OCI-LY7 (cell line): ENCODE measurements at regions of chr22 and their contacts with region 1.

Region 1: DNA sequence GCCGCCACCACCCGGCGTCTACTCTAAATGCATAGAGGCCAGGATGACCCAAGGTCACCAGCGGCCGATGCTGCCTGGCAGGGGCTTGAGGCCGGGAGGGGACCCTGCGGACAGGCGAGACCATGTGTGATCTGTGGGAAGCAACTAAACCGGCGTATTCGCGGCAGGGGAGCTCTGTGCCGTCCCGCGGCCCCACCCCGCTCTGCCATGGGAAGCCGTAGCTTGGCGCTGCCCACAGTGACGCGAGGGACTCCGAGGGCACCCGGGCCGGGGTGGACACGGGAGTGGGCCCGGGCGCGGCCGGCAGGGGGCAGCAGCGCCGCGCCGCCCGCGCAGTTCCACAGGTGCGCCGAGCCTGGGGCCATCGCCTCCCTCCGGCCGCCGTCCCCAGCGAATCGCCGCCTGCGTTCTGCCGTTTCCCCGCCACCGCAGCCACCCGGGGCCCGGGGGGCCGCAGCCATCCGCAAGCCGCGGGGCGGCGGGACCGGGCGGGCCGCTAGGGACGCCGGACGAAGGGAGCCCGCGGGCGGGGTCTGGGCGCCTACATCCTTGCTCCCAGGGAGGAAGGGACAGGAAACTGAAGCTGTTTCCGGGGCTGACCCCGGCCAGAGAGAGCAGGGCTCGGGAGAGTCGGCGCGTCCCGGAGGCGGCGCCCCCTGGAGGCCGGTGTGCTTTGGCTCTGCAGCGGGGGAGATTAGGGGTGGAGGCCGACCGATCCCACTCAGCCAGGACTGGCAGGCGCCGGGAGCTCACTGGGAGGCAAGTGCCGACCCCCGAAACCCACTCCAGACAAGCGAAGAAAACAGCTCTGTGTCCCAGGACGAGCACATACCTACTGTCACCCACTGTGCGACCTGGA is 12.5 kb upstream of the HDHD5 start:
- DNase-seq: peak; percentile 92
- H3K4me3 ChIP-seq: peak overlapping the region; percentile 72
- H3K27ac ChIP-seq: peak overlapping the region; percentile 46
- H3K4me1 ChIP-seq: peaks cover 11% of the 10 kb centered on the region
- CTCF ChIP-seq: peak; percentile 90

Region 2: DNA sequence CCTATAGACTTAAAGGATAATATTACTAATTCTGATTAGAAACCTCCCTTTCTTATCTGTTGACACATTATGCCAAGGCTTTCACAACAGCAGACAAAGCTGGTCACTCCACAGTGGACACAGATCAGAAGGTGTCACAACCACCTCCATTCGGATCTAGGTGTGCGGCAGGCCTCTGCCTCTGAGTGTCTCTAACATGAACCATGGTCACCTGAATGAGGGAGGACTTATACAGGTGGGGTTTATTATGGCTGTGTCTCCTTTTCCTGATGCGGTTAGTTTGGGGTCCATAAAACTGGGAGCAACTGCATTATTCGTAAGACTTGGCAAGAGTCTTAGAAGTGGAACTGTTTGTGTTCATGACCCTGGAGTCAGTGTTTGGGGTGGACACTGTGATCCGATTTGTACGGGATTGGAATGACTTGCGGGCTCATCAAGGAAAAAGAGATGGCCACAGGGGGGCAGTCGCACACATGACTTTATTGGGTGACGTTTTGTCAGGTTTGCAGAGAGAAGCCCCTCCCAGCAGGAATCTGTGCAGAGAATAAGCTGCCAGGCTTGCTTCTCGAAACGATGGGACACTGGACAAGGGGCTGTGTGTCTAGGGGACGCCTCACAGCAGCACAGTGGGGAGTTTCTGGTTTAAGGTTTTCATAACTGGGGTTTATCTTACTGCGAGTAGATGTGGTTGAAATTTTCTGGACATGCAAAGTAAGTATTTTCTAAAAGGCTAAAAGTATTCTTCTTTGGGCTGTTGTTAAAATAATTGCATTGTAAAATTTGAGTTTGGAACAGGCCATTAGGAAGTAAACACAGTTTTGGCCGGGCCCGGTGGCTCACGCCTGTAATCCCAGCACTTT is 254.2 kb before region 1 on chr22:
- CTCF ChIA-PET with region 1: no interaction called
- POLR2A ChIA-PET with region 1: no interaction called
- intact Hi-C with region 1: loop called (anchors 5 kb)
- DNase-seq: peak; percentile 85
- H3K4me3 ChIP-seq: no peak overlapping the region
- H3K27ac ChIP-seq: no peak overlapping the region
- H3K4me1 ChIP-seq: peaks cover 89% of the 10 kb centered on the region
- CTCF ChIP-seq: peak; percentile 94

Region 3: GRCh38 chr22:17047656-17048055 is 123.9 kb before region 1 on chr22:
- CTCF ChIA-PET with region 1: no interaction called
- POLR2A ChIA-PET with region 1: no interaction called
- intact Hi-C with region 1: no loop called
- DNase-seq: no peak
- H3K4me3 ChIP-seq: no peak overlapping the region
- H3K27ac ChIP-seq: no peak overlapping the region
- H3K4me1 ChIP-seq: peaks cover 30% of the 10 kb centered on the region
- CTCF ChIP-seq: no peak

Region 4: DNA sequence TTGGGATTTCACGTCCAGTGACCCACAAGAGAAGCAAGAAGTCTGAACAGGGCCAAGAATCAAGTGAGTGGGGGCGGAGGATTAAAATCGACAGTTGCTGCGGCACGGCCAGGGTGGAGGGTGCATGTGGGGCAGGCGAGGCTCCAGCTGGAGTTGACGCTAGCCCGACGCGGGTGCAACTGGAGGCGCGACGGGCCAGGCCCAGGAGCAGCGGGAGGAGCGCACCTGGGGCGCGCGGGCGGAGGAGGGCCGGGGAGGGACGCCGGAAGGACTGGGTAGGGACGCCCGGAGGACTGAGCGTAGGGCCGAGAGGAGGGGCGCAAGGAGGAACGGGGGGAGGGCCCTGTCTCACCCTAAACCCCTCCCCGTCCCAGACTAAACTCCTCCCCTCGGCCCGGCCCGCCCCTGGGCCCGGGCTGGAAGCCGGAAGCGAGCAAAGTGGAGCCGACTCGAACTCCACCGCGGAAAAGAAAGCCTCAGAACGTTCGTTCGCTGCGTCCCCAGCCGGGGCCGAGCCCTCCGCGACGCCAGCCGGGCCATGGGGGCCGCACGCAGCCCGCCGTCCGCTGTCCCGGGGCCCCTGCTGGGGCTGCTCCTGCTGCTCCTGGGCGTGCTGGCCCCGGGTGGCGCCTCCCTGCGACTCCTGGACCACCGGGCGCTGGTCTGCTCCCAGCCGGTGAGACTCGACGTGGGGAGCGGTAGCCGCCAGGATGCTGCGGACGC is 86.8 kb before region 1 on chr22 and contains the start of gene IL17RA:
- CTCF ChIA-PET with region 1: no interaction called
- POLR2A ChIA-PET with region 1: no interaction called
- intact Hi-C with region 1: loop called (anchors 2 kb)
- DNase-seq: peak; percentile 92
- H3K4me3 ChIP-seq: peak within 1 kb of the TSS; percentile 92
- H3K27ac ChIP-seq: peak within 1 kb of the TSS; percentile 19
- H3K4me1 ChIP-seq: peaks cover 50% of the 10 kb centered on the region
- CTCF ChIP-seq: no peak
- total RNA-seq, gene IL17RA: 5.5 and 7.8 TPM in 2 replicates

Region 5: DNA sequence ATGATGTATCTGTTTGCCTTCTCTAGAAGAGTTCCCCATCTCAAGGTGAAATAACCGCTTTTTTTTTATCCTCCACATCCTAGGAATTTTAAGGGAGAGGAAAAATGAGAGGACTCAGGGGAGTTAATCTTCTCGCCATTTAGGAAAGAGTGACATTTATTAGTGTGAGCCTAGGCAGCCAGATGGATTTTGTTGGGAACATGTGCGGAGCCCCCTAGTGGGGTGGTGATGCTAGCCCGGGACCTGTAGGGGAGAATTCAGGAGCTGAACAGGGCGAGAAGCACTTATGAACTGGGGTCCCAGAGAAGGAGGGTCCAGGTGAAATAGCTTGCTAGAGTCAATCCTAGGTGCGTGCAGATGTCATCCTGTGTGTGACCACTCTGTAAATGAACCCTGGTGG is 76.0 kb before region 1 on chr22:
- CTCF ChIA-PET with region 1: no interaction called
- POLR2A ChIA-PET with region 1: no interaction called
- intact Hi-C with region 1: no loop called
- DNase-seq: no peak
- H3K4me3 ChIP-seq: no peak overlapping the region
- H3K27ac ChIP-seq: no peak overlapping the region
- H3K4me1 ChIP-seq: peaks cover 25% of the 10 kb centered on the region
- CTCF ChIP-seq: peak; percentile 74

Region 6: DNA sequence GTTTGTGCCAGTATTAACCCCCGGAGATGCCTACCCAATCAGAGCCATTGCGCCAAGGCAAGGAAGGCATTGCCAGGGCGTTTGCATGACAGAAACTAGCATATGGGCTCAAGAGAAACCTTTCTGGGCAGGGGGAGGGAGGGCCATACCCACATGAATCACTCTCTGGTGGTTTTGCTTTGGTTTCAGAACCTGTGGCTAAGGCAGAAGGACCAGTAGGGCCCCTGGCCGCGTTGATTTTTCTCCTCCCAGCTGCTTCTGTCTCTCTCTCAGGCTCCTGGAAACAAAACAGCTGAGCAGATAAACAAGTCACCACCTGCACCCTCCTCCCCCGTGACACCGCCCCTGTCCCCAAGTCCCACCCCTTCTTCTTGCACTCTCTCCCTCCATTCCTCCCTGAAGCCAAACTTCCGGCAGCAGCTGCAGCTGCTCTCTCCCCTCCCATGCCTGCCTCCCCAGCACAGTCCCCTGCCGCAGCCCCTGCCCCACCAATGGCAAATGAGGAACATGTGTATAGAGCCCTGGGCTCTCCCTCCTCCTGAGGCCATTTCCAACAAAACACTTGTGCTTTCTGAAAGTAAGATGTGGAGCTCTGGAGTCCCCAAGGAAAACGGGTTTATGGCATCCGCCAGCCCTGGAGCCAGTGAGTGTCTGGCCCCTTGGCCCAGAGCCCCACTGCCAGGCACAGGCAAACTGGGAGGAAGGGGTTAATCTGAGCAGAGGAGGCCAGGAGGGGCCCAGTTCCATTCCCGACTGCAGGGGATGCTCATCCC is 86.7 kb after region 1 on chr22:
- CTCF ChIA-PET with region 1: interaction called, 3 read pairs
- POLR2A ChIA-PET with region 1: interaction called, 3 read pairs
- intact Hi-C with region 1: loop called (anchors 2 kb)
- DNase-seq: peak; percentile 93
- H3K4me3 ChIP-seq: peak overlapping the region; percentile 44
- H3K27ac ChIP-seq: peak overlapping the region; percentile 84
- H3K4me1 ChIP-seq: peaks cover 23% of the 10 kb centered on the region
- CTCF ChIP-seq: no peak

Region 7: GRCh38 chr22:17303840-17304779 is 132.6 kb after region 1 on chr22:
- CTCF ChIA-PET with region 1: no interaction called
- POLR2A ChIA-PET with region 1: no interaction called
- intact Hi-C with region 1: no loop called
- DNase-seq: peak; percentile 41
- H3K4me3 ChIP-seq: no peak overlapping the region
- H3K27ac ChIP-seq: no peak overlapping the region
- H3K4me1 ChIP-seq: peaks cover 11% of the 10 kb centered on the region
- CTCF ChIP-seq: no peak

Region 8: GRCh38 chr22:17501679-17502285 is 330.2 kb after region 1 on chr22:
- CTCF ChIA-PET with region 1: interaction called, 26 read pairs
- POLR2A ChIA-PET with region 1: interaction called, 19 read pairs
- intact Hi-C with region 1: loop called (anchors 1 kb)
- DNase-seq: peak; percentile 85
- H3K4me3 ChIP-seq: peak overlapping the region; percentile 27
- H3K27ac ChIP-seq: no peak overlapping the region
- H3K4me1 ChIP-seq: peaks cover 10% of the 10 kb centered on the region
- CTCF ChIP-seq: peak; percentile 99